Activated naive CD8-positive, alpha-beta T cell treated with anti-CD3 and anti-CD28 coated beads, Interleukin-2, amount 10 ng/mL, durations not matched to agents 7 days and 5 days (primary cell): ENCODE measurements at regions of chrX and their contacts with region 1.

Region 1: DNA sequence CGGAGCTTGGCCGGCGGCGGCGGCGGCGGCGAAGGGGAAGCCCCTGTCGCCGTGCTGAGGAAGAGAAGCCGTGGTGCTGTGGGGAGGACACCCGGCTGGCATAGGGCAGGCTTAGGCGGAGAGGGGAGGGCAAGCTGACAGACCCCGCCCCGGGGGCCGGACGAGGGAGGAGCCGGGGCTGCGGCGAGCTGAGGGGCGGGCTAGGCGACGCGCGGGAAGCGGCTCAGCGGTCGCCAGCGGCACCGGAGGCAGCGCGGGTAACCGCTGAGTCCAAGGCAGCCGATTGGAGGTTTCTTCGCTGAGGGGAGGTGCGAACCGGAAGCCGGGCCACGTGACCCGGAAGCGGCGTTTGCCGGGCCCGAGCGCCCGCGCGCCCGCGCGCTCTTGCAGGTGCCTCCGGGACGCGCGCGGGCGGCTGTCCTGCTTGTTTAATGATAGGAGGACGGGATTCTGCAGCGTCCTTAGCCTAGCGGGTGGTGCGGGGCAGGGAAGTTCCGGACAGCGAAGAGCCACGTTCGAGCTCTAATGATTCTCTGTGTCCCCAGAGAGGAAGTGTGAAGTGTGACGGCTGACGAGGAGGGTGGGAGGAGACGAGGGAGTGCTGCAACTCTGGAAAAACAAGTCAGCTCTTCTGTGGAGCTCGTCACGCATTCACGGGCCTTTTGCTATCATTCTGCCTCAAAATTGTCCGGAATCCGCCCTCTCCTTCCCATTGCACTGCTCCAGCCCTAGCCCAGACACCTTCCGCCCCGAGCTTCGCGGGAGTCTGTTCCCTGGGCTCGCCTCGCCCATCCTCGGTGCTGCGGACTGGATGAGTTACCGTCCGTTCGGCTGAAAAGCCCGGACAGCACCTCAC is at the start of gene AP1S2:
- DNase-seq: peak; percentile 94
- ATAC-seq: peak; percentile 95
- H3K4me3 Mint-ChIP-seq: peak within 1 kb of the TSS; percentile 87
- H3K27ac Mint-ChIP-seq: peak within 1 kb of the TSS; percentile 93
- H3K4me1 Mint-ChIP-seq: peaks cover 17% of the 10 kb centered on the region
- H3K27me3 Mint-ChIP-seq: peaks cover 2% of the 10 kb centered on the region
- total RNA-seq, gene AP1S2: 28.8 to 31.5 TPM

Region 2: DNA sequence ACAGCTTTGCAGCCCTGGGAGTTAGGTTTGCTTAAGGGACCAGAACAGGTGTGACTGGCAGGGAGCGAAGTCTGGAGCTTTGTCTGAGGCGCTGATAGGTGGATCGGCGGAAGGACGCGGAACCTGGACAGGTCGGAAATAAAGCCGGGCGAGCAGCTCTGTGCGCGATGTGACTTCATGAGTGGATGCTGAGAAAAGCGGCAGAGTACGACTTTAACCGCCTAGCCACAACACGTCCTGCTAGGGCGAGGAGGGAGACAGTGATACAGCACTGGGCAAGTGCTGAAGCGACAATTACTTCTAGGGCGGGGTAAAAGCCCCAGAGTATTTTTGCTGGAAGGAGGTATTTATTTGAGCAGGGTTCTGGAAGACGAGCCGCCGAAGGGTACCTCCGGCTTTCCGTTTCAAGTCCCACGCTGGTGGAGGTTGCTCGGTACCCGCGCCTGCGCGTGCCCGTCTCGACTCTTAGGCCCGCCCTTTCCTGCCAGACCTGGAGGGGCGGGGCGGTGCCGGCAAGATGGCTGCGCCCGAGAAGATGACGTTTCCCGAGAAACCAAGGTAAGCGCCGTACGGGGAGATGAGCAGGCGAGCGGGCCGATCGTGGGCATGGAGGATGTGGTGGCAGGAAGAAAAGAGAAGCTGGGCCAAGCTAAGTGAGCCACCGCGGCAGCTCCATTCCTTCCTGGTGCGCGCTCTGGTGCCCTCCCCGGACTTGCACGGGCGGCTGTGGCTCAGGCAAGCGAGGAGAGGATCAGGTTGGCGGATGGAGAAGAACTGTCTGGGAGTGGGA is 64.8 kb before region 1 on chrX and contains the start of gene ZRSR2:
- POLR2A ChIA-PET with region 1: interaction called, 12 read pairs
- DNase-seq: peak; percentile 84
- ATAC-seq: peak; percentile 91
- H3K4me3 Mint-ChIP-seq: no peak within 1 kb of the TSS
- H3K27ac Mint-ChIP-seq: no peak within 1 kb of the TSS
- H3K4me1 Mint-ChIP-seq: peaks cover 13% of the 10 kb centered on the region
- H3K27me3 Mint-ChIP-seq: no peaks in the 10 kb centered on the region
- total RNA-seq, gene ZRSR2: 19.3 TPM

Region 3: DNA sequence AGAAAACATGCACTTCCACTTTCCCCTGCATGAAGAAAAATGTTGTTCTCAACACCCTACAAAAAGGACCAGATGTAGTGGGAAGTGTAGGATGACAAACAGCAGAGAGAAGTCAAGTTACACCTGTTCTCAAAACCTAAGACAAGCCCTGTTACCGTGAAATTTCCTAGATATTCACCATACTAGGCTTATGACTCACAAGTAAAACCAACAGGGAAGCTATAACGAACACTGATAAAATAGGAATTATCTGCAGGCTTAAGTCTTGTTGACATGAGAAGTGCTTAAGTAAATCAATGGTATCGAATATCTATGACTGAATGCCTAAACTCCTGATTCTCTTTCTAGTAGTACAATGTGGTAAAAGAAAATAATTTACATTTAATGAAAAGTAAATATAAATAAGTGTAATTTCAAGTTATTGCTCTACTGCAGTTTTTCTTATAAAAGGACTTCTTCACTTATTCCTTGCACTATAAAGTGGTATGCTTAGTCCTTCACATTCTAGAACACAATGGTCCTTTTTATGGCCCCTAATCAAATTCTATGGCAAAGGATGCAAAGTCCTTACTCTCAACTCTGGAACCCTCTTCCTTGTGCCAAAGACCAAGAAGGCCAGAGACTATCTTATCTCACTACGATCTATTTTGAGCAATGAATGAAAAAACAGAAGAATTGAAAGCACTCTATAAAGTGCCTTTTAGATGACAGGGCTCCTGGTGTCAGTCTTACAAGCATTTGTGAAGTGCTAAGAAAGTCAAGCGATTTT is 19.9 kb before region 1 on chrX:
- POLR2A ChIA-PET with region 1: no interaction called
- DNase-seq: no peak
- ATAC-seq: no peak
- H3K4me3 Mint-ChIP-seq: no peak overlapping the region
- H3K27ac Mint-ChIP-seq: no peak overlapping the region
- H3K4me1 Mint-ChIP-seq: peaks cover 2% of the 10 kb centered on the region
- H3K27me3 Mint-ChIP-seq: no peaks in the 10 kb centered on the region